ENCODE measurements at regions of chr7 and their contacts with region 1.

Region 1: DNA sequence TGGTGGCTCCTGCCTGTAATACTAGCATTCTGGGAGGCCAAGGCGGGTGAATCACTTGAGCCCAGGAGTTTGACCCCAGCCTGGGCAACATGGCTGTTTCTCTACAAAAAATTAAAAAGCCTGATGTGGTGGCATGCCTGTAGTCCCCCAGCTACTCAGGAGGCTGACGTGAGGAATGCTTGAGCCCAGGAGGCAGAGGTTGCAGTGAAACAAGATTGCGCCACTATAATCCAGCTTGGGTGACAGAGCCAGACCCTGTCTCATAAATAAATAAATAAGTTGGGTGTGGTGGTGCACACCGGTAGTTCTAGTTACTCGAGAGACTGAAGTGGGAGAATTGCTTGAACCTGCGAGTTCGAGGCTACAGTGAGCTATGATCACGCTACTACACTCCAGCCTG is 65.0 kb downstream of the GNA12 start:
- DNase-seq: peak in 1 of 3 donors; percentile 33
- H3K4me3 ChIP-seq: no peak overlapping the region
- H3K4me3 Mint-ChIP-seq: no peak overlapping the region
- H3K27ac ChIP-seq: no peak overlapping the region
- H3K27ac Mint-ChIP-seq: peak overlapping the region in 1 of 7 donors; percentile 19
- H3K4me1 ChIP-seq: peaks cover 23 to 35% of the 10 kb centered on the region in 2 donors
- H3K4me1 Mint-ChIP-seq: peaks cover 41% of the 10 kb centered on the region
- H3K27me3 ChIP-seq: no peaks in the 10 kb centered on the region
- H3K27me3 Mint-ChIP-seq: no peaks in the 10 kb centered on the region
- CTCF ChIP-seq: no peak

Region 2: GRCh38 chr7:2709553-2710285 is 69.4 kb before region 1 on chr7:
- intact Hi-C with region 1: no loop called
- DNase-seq: peak; percentile 68 to 71 (median 68)
- H3K4me3 ChIP-seq: peak overlapping the region in 1 of 3 experiments; percentile 49
- H3K4me3 Mint-ChIP-seq: peak overlapping the region; percentile 55 to 83
- H3K27ac ChIP-seq: peak overlapping the region in 1 of 2 donors; percentile 9
- H3K27ac Mint-ChIP-seq: peak overlapping the region in 1 of 7 donors; percentile 56
- H3K4me1 ChIP-seq: peaks cover 18 to 22% of the 10 kb centered on the region in 2 donors
- H3K4me1 Mint-ChIP-seq: peaks cover 30% of the 10 kb centered on the region
- H3K27me3 ChIP-seq: peaks cover 0 to 6% of the 10 kb centered on the region in 2 donors
- H3K27me3 Mint-ChIP-seq: peaks cover 13 to 47% (median 20%) of the 10 kb centered on the region in 3 donors
- CTCF ChIP-seq: peak; percentile 91

Region 3: DNA sequence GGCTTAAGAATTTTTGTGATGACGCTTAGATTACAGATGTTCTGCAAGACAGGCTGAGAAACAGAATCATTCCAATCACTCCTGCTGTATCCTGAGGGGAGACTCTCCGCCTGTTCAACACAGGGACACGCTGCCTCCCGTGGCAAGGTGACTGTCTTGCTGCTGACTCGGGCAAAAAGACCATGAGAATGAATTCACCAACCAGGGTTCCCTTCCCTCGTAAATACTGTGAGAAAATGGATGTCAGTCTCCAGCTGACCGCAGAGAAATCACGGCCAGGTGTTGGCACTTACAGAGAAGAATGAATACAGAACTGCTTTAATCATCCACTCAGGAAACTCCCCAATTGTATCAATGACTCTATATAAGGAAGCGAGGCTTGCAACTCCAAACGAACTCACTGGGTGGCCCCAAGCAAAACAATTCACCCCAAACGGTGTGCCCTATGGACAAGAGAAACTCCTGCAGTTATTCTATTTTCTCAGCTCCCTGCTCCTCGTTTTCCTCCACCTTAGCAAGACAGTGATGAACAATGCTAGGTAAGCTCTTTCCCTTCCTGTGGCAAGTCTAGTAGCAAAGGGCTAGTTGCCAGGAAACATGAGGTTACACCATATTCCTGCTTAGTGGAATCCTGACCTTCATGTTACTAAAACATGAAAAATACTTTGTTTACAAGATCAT is 42.2 kb after region 1 on chr7:
- intact Hi-C with region 1: loop called in 1 of 2 experiments (anchors 5 kb)
- DNase-seq: peak; percentile 36 to 72 (median 49)
- H3K4me3 ChIP-seq: no peak overlapping the region
- H3K4me3 Mint-ChIP-seq: no peak overlapping the region
- H3K27ac ChIP-seq: peak overlapping the region; percentile 36 to 80
- H3K27ac Mint-ChIP-seq: peak overlapping the region in 6 of 7 donors; percentile 36 to 90 (median 81)
- H3K4me1 ChIP-seq: peaks cover 7% of the 10 kb centered on the region in 2 donors
- H3K4me1 Mint-ChIP-seq: peaks cover 31% of the 10 kb centered on the region
- H3K27me3 ChIP-seq: no peaks in the 10 kb centered on the region
- H3K27me3 Mint-ChIP-seq: peaks cover 0 to 3% (median 0%) of the 10 kb centered on the region in 3 donors
- CTCF ChIP-seq: no peak

Region 4: GRCh38 chr7:3558400-3558799 is 779.3 kb after region 1 on chr7:
- intact Hi-C with region 1: no loop called
- DNase-seq: no peak
- H3K4me3 ChIP-seq: no peak overlapping the region
- H3K4me3 Mint-ChIP-seq: no peak overlapping the region
- H3K27ac ChIP-seq: no peak overlapping the region
- H3K27ac Mint-ChIP-seq: no peak overlapping the region
- H3K4me1 ChIP-seq: no peaks in the 10 kb centered on the region
- H3K4me1 Mint-ChIP-seq: no peaks in the 10 kb centered on the region
- H3K27me3 ChIP-seq: no peaks in the 10 kb centered on the region
- H3K27me3 Mint-ChIP-seq: peaks cover 0 to 6% (median 0%) of the 10 kb centered on the region in 3 donors
- CTCF ChIP-seq: no peak